Natural killer cell (primary cell): ENCODE measurements at regions of chr21 and their contacts with region 1.

Region 1: DNA sequence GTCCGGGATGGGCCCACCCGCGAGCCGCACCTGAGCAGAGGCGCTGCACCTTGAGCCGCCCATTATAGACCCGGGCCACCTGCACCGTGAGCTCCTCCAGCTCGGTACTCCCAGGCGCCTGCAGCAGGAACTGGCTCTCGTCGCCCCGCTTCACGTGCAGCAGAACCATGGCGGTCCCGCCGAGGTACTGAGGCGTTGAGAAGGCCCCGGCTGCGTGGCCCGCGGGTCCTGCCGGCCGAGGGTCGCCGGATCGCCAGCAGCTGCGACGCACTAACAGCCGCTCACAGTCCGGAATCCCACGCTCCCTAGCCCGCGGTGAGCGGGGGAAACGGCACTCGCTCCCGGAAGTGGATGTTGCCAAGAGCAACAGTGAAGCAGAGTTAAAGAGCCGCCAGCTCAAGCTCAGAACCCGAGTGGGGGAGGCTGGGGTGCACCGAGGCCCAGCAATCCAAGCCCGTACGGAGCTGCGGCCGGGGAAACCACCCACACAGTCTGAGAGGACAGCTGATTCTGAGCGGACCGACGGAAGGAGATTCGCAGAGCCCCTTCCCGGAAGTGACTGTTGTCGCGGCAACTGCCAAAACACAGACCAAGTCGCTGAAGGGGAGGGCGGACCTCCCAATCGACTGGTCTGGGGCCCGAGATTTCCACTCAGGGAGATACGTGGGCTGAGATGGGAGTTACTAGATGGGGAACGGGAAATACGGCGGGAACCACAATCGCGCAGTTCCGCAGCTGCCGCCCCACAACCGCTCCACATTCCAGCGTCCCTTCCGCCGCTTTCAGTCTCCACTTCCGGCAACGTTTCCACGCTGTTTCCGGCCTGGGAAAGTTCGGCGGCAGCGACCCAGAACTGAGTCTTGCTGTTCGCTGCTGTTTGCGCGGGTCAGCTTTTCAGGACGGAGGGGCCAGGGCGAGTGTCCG is at the start of gene CFAP298:
- DNase-seq: peak; percentile 86 to 97
- ATAC-seq: peak; percentile 92 to 99 (median 94)
- H3K4me3 ChIP-seq: peak within 1 kb of the TSS; percentile 85
- H3K4me3 Mint-ChIP-seq: peak within 1 kb of the TSS; percentile 96
- H3K27ac ChIP-seq: peak within 1 kb of the TSS; percentile 87
- H3K27ac Mint-ChIP-seq: peak within 1 kb of the TSS; percentile 95 to 97
- H3K4me1 ChIP-seq: peaks cover 18% of the 10 kb centered on the region
- H3K4me1 Mint-ChIP-seq: peaks cover 14 to 20% of the 10 kb centered on the region in 2 donors
- H3K27me3 ChIP-seq: no peaks in the 10 kb centered on the region
- H3K27me3 Mint-ChIP-seq: peaks cover 0 to 11% of the 10 kb centered on the region in 2 donors
- CTCF ChIP-seq: no peak
- total RNA-seq, gene CFAP298: 16.1 to 23.7 (median 16.8) TPM

Region 2: GRCh38 chr21:31731802-31732596 is 880.3 kb before region 1 on chr21 and contains the start of gene SCAF4:
- intact Hi-C with region 1: loop called (anchors 5 kb)
- DNase-seq: peak; percentile 77 to 90
- ATAC-seq: peak; percentile 87 to 97 (median 90)
- H3K4me3 ChIP-seq: peak within 1 kb of the TSS; percentile 62
- H3K4me3 Mint-ChIP-seq: peak within 1 kb of the TSS; percentile 84
- H3K27ac ChIP-seq: peak within 1 kb of the TSS; percentile 82
- H3K27ac Mint-ChIP-seq: no peak within 1 kb of the TSS
- H3K4me1 ChIP-seq: peaks cover 21% of the 10 kb centered on the region
- H3K4me1 Mint-ChIP-seq: peaks cover 4 to 17% of the 10 kb centered on the region in 2 donors
- H3K27me3 ChIP-seq: no peaks in the 10 kb centered on the region
- H3K27me3 Mint-ChIP-seq: no peaks in the 10 kb centered on the region
- CTCF ChIP-seq: no peak
- total RNA-seq, gene SCAF4: 93.2 to 109 (median 101) TPM

Region 3: GRCh38 chr21:32392880-32393676 is 219.3 kb before region 1 on chr21 and contains the start of gene URB1:
- intact Hi-C with region 1: loop called (anchors 1 kb)
- DNase-seq: peak; percentile 94 to 97
- ATAC-seq: peak; percentile 98 to 99 (median 98)
- H3K4me3 ChIP-seq: peak within 1 kb of the TSS; percentile 88
- H3K4me3 Mint-ChIP-seq: peak within 1 kb of the TSS; percentile 84
- H3K27ac ChIP-seq: peak within 1 kb of the TSS; percentile 91
- H3K27ac Mint-ChIP-seq: peak within 1 kb of the TSS; percentile 83 to 86
- H3K4me1 ChIP-seq: peaks cover 17% of the 10 kb centered on the region
- H3K4me1 Mint-ChIP-seq: peaks cover 37 to 38% of the 10 kb centered on the region in 2 donors
- H3K27me3 ChIP-seq: no peaks in the 10 kb centered on the region
- H3K27me3 Mint-ChIP-seq: peaks cover 0 to 7% of the 10 kb centered on the region in 2 donors
- CTCF ChIP-seq: no peak
- total RNA-seq, gene URB1: 6.1 to 7.8 (median 7.5) TPM

Region 4: GRCh38 chr21:32569261-32570230 is 42.8 kb before region 1 on chr21:
- intact Hi-C with region 1: loop called (anchors 1 kb)
- DNase-seq: peak; percentile 73 to 94
- ATAC-seq: peak; percentile 89 to 93 (median 92)
- H3K4me3 ChIP-seq: peak overlapping the region; percentile 52
- H3K4me3 Mint-ChIP-seq: peak overlapping the region; percentile 94
- H3K27ac ChIP-seq: peak overlapping the region; percentile 36
- H3K27ac Mint-ChIP-seq: peak overlapping the region; percentile 70 to 89
- H3K4me1 ChIP-seq: peaks cover 17% of the 10 kb centered on the region
- H3K4me1 Mint-ChIP-seq: peaks cover 22 to 23% of the 10 kb centered on the region in 2 donors
- H3K27me3 ChIP-seq: no peaks in the 10 kb centered on the region
- H3K27me3 Mint-ChIP-seq: no peaks in the 10 kb centered on the region
- CTCF ChIP-seq: peak; percentile 87

Region 5: GRCh38 chr21:32641710-32642698 is 29.7 kb after region 1 on chr21:
- intact Hi-C with region 1: no loop called
- DNase-seq: no peak
- ATAC-seq: no peak
- H3K4me3 ChIP-seq: no peak overlapping the region
- H3K4me3 Mint-ChIP-seq: no peak overlapping the region
- H3K27ac ChIP-seq: no peak overlapping the region
- H3K27ac Mint-ChIP-seq: no peak overlapping the region
- H3K4me1 ChIP-seq: no peaks in the 10 kb centered on the region
- H3K4me1 Mint-ChIP-seq: no peaks in the 10 kb centered on the region
- H3K27me3 ChIP-seq: no peaks in the 10 kb centered on the region
- H3K27me3 Mint-ChIP-seq: no peaks in the 10 kb centered on the region
- CTCF ChIP-seq: no peak

Region 6: GRCh38 chr21:32727687-32728455 is 115.5 kb after region 1 on chr21 and contains the start of gene SYNJ1:
- intact Hi-C with region 1: loop called (anchors 1 kb)
- DNase-seq: peak; percentile 95 to 96
- ATAC-seq: peak; percentile 88 to 97 (median 92)
- H3K4me3 ChIP-seq: peak within 1 kb of the TSS; percentile 92
- H3K4me3 Mint-ChIP-seq: peak within 1 kb of the TSS; percentile 95
- H3K27ac ChIP-seq: peak within 1 kb of the TSS; percentile 78
- H3K27ac Mint-ChIP-seq: peak within 1 kb of the TSS; percentile 85 to 96
- H3K4me1 ChIP-seq: peaks cover 6% of the 10 kb centered on the region
- H3K4me1 Mint-ChIP-seq: peaks cover 31 to 32% of the 10 kb centered on the region in 2 donors
- H3K27me3 ChIP-seq: no peaks in the 10 kb centered on the region
- H3K27me3 Mint-ChIP-seq: no peaks in the 10 kb centered on the region
- CTCF ChIP-seq: no peak
- total RNA-seq, gene SYNJ1: 16.2 to 22.4 (median 20.1) TPM

Region 7: DNA sequence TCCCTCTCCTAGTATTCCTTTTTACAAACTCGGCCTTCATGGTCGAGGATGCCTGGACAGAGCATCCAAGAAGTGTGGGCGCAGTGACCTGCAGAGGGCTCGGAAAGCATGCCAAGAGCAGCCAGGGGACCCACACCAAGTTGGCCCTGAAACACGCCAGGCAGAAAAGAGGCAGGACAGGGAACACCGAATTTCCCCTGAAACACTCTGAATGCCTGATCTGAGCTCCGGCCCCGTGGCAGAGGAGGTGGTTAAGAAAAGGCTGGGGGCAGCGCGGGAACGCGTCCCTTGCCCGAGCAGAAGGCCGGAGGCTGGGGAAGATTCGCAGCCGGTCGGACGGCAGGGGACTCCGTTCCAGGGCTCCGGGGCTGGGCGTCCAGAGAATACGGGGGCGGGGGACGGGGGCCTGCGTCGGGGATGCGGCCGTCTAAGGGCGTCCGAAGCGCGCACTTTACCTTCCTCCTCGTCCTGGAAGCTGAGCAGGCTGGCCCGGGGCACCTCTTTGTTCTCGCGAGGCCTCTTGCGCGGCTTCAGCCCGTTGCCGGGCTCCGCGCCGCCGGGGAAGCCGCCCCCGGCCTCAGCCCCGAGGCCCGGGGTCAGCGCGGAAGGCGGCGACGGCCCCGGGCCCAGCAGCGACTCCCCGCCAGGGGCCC is 158.7 kb after region 1 on chr21:
- intact Hi-C with region 1: loop called (anchors 5 kb)
- DNase-seq: no peak
- ATAC-seq: peak; percentile 41 to 57 (median 43)
- H3K4me3 ChIP-seq: peak overlapping the region; percentile 77
- H3K4me3 Mint-ChIP-seq: peak overlapping the region; percentile 96
- H3K27ac ChIP-seq: peak overlapping the region; percentile 75
- H3K27ac Mint-ChIP-seq: peak overlapping the region; percentile 98 to 99
- H3K4me1 ChIP-seq: peaks cover 9% of the 10 kb centered on the region
- H3K4me1 Mint-ChIP-seq: peaks cover 62 to 63% of the 10 kb centered on the region in 2 donors
- H3K27me3 ChIP-seq: no peaks in the 10 kb centered on the region
- H3K27me3 Mint-ChIP-seq: peaks cover 3 to 8% of the 10 kb centered on the region in 2 donors
- CTCF ChIP-seq: no peak

Region 8: GRCh38 chr21:34559089-34559631 is 1946.8 kb after region 1 on chr21:
- intact Hi-C with region 1: no loop called
- DNase-seq: no peak
- ATAC-seq: no peak
- H3K4me3 ChIP-seq: no peak overlapping the region
- H3K4me3 Mint-ChIP-seq: no peak overlapping the region
- H3K27ac ChIP-seq: no peak overlapping the region
- H3K27ac Mint-ChIP-seq: no peak overlapping the region
- H3K4me1 ChIP-seq: no peaks in the 10 kb centered on the region
- H3K4me1 Mint-ChIP-seq: peaks cover 6% of the 10 kb centered on the region in 2 donors
- H3K27me3 ChIP-seq: no peaks in the 10 kb centered on the region
- H3K27me3 Mint-ChIP-seq: no peaks in the 10 kb centered on the region
- CTCF ChIP-seq: no peak